ENCODE measurements at regions of chr2 and their contacts with region 1.

Region 1: GRCh38 chr2:47034973-47035609 is 119.5 kb upstream of the MCFD2 start:
- DNase-seq: peak; percentile 63
- ATAC-seq: peak; percentile 78
- H3K4me3 ChIP-seq: peak overlapping the region in 1 of 5 experiments; percentile 1
- H3K4me3 Mint-ChIP-seq: peak overlapping the region; percentile 61
- H3K27ac ChIP-seq: peak overlapping the region; percentile 62 to 77
- H3K27ac Mint-ChIP-seq: peak overlapping the region; percentile 80
- H3K4me1 ChIP-seq: peaks cover 35 to 44% of the 10 kb centered on the region in 2 donors
- H3K4me1 Mint-ChIP-seq: peaks cover 59% of the 10 kb centered on the region
- H3K27me3 ChIP-seq: no peaks in the 10 kb centered on the region
- H3K27me3 Mint-ChIP-seq: no peaks in the 10 kb centered on the region
- CTCF ChIP-seq: no peak

Region 2: DNA sequence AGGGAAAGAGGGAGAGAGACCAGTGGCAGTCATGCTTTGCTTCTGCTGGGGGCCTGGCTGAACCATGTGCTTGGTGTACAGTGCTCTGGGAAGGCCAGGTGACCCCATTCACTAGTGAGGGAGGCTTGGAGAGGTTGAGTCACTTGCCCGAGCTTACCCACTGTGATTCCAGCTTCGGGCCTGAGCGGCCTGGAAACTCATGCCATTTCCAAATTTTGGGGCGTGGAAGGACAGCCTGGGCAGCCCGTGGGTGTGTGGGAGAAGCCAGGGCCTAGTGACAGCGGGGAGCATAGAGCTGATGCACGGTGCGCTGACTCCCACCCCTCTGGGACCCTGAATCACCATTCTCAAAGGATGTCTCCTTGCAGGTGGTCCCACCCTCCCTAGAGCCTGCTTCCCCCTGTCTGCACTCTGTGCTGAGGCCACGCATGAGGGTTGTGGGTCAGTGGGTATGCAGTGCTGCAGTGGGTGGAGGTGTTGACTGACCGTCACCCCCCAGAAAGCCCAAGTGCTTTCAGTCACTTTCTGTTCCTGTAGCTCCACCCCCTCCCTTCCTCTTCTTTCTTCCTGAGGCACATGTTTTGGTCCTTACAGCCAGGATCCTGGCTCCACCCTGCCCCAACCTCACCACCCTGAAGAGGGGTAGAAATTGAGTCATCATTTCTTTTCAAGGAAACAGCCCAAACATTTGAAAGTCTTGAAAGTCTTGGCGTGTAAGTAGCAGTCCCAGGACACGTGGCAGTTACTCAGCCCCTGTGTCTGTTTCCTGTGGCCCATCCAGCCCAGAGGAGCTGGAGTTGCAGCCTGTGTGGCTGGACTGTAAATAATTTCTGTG is 50.2 kb before region 1 on chr2:
- CTCF ChIA-PET with region 1: no interaction called
- POLR2A ChIA-PET with region 1: no interaction called
- intact Hi-C with region 1: loop called (anchors 5 kb)
- DNase-seq: peak; percentile 52
- ATAC-seq: peak; percentile 7
- H3K4me3 ChIP-seq: peak overlapping the region in 2 of 5 experiments; percentile 5 to 60
- H3K4me3 Mint-ChIP-seq: peak overlapping the region; percentile 90
- H3K27ac ChIP-seq: peak overlapping the region; percentile 80 to 83
- H3K27ac Mint-ChIP-seq: peak overlapping the region; percentile 99
- H3K4me1 ChIP-seq: peaks cover 79 to 84% of the 10 kb centered on the region in 2 donors
- H3K4me1 Mint-ChIP-seq: peaks cover 88% of the 10 kb centered on the region
- H3K27me3 ChIP-seq: no peaks in the 10 kb centered on the region
- H3K27me3 Mint-ChIP-seq: no peaks in the 10 kb centered on the region
- CTCF ChIP-seq: no peak

Region 3: DNA sequence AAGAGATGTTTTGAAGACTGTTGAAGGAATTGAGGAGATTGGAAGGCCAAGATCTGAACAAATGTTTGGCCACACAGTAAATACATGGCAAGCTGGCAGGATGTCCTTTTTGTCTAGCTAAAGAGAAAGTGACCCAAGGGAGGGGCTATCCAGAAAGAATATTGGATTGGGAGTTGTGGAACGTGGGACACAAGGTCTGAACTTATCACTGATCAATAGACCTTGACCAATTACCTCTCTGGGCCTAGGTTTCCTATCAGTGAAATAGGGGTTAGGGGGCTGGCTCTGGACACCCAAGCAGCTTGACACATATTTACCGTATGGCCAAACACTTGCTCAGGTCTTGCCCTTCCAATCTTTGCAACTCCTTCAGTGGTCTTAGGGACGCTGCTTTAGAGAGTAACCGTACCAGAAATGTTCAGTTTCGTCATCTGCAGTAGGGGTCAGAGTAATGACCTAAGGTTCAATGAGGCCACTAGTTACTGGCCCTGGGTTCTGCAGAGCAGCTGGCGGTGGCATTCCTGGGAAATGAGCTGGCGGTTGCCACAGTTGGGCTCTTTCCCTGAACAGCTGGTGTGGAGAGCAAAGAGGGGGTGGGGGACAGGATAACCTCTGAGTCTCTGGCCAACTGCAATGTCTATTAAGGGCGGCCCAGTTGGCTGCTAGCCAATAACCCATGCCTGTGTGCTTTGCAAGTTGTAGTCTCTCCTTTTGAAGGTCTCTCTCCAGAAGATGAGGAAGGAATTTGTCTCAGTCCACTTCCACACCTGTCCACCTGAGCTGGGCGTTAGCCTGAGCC is 190.2 kb after region 1 on chr2:
- CTCF ChIA-PET with region 1: no interaction called
- POLR2A ChIA-PET with region 1: no interaction called
- intact Hi-C with region 1: no loop called
- DNase-seq: no peak
- ATAC-seq: no peak
- H3K4me3 ChIP-seq: no peak overlapping the region
- H3K4me3 Mint-ChIP-seq: no peak overlapping the region
- H3K27ac ChIP-seq: no peak overlapping the region
- H3K27ac Mint-ChIP-seq: no peak overlapping the region
- H3K4me1 ChIP-seq: peaks cover 10 to 11% of the 10 kb centered on the region in 2 donors
- H3K4me1 Mint-ChIP-seq: peaks cover 17% of the 10 kb centered on the region
- H3K27me3 ChIP-seq: no peaks in the 10 kb centered on the region
- H3K27me3 Mint-ChIP-seq: peaks cover 8% of the 10 kb centered on the region
- CTCF ChIP-seq: no peak

Region 4: GRCh38 chr2:47300609-47301276 is 265.7 kb after region 1 on chr2:
- CTCF ChIA-PET with region 1: no interaction called
- POLR2A ChIA-PET with region 1: no interaction called
- intact Hi-C with region 1: loop called (anchors 5 kb)
- DNase-seq: peak; percentile 72
- ATAC-seq: peak; percentile 91
- H3K4me3 ChIP-seq: peak overlapping the region; percentile 5 to 58 (median 36)
- H3K4me3 Mint-ChIP-seq: peak overlapping the region; percentile 81
- H3K27ac ChIP-seq: peak overlapping the region; percentile 49 to 62
- H3K27ac Mint-ChIP-seq: peak overlapping the region; percentile 53
- H3K4me1 ChIP-seq: peaks cover 27 to 35% of the 10 kb centered on the region in 2 donors
- H3K4me1 Mint-ChIP-seq: peaks cover 40% of the 10 kb centered on the region
- H3K27me3 ChIP-seq: peaks cover 0 to 9% (median 0%) of the 10 kb centered on the region in 4 experiments
- H3K27me3 Mint-ChIP-seq: no peaks in the 10 kb centered on the region
- CTCF ChIP-seq: no peak

Measured in B cell (primary cell).